ENCODE measurements at regions of chr11 and their contacts with region 1.

Region 1: DNA sequence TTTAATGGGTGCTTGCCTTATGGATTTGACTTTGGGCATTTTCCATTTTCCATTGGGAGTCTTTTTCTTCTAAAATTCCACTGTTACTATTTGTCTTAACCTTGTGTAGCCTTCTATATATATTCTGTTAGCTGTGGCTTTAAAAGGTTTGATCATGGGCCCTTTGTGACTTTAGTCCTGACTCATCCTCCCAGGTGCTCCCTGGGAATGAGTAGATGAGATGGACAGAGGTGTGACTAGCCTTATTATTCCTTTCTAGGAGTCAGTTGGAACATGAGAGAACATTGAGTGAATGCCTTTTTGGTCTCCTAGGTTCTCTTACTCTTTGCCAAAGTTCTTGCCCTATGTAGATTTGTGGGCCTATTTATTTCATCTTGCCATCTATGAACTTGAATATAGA is 39.0 kb downstream of the DDX10 start:
- DNase-seq: no peak
- ATAC-seq: no peak

Region 2: GRCh38 chr11:109697140-109697843 is 993.4 kb after region 1 on chr11:
- intact Hi-C with region 1: loop called in 1 of 2 experiments (anchors 10 kb)
- DNase-seq: no peak
- ATAC-seq: peak; percentile 27 to 51

Region 3: GRCh38 chr11:109864834-109865547 is 1161.1 kb after region 1 on chr11:
- intact Hi-C with region 1: loop called (anchors 5 to 10 kb)
- DNase-seq: no peak
- ATAC-seq: no peak

Measured in left cardiac atrium (tissue), 4 donors.